GM12878 (cell line): ENCODE measurements at regions of chr7 and their contacts with region 1.

Region 1: GRCh38 chr7:99312316-99313203 is 13.1 kb upstream of the ARPC1A start:
- DNase-seq: peak; percentile 35
- ATAC-seq: peak; percentile 84
- H3K4me3 ChIP-seq: no peak overlapping the region
- H3K27ac ChIP-seq: no peak overlapping the region
- H3K4me1 ChIP-seq: peaks cover 13% of the 10 kb centered on the region
- H3K27me3 ChIP-seq: no peaks in the 10 kb centered on the region
- CTCF ChIP-seq: peak; percentile 87 to 91 (median 88)
- EP300 ChIP-seq: no peak
- POLR2A ChIP-seq: no peak
- RAD21 ChIP-seq: peak; percentile 90

Region 2: DNA sequence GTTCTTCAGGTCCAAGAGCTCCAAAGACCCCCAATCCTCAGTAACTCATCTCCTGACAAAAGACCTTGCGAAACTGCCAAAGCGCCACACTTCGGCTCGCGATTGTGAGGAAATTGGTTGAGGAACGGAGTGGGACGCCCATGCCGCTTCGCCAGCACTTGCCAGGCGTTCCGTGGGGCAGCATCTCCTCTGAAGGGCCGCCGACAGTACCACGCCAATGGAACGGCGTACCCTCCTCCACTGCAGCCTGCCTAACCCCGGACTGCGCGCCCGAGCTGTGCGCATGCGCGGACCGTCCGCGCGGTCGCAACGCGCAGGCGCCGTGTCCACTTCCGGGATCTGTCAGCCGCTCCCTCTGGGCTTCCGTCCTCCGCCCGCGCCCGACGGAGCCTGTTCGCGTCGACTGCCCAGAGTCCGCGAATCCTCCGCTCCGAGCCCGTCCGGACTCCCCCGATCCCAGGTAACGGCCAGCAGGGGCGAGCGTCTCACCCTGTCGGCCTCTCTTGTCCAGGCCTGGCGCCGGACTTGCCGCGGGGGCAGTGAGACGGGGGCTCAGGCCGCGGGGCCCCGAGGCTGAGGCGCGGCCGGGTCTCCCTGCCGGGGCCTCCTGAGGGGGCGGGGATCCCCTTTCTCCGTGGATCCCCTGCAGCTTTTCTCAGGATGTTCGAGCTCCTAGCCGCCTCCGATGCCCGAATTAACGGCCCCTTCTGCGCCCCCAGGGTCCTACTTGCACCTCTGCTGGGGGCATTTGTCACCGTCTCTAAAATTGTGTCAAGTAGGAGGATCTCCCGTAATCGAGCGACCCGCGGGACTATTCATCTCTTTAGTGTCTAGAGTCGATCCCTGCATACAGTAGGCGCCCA is 13.2 kb after region 1 on chr7 and contains the start of gene ARPC1A:
- CTCF ChIA-PET with region 1: interaction called, 12 read pairs
- POLR2A ChIA-PET with region 1: no interaction called
- RAD21 ChIA-PET with region 1: interaction called, 3 read pairs
- SMC1A ChIA-PET with region 1: interaction called, 7 read pairs
- in situ Hi-C with region 1: no loop called
- intact Hi-C with region 1: no loop called
- DNase-seq: peak; percentile 87
- ATAC-seq: peak; percentile 93
- H3K4me3 ChIP-seq: peak within 1 kb of the TSS; percentile 100
- H3K27ac ChIP-seq: peak within 1 kb of the TSS; percentile 63
- H3K4me1 ChIP-seq: peaks cover 4% of the 10 kb centered on the region; the same call in 1 of the 2 replicates
- H3K27me3 ChIP-seq: no peaks in the 10 kb centered on the region
- CTCF ChIP-seq: peak in 2 of 3 experiments; percentile 3 to 10; a peak in 2 of 6 replicates
- EP300 ChIP-seq: no peak
- POLR2A ChIP-seq: peak; percentile 99
- RAD21 ChIP-seq: no peak
- polyA plus RNA-seq, gene ARPC1A: 102 to 103 TPM

Region 3: GRCh38 chr7:100034871-100035510 is 722.4 kb after region 1 on chr7:
- CTCF ChIA-PET with region 1: no interaction called
- POLR2A ChIA-PET with region 1: no interaction called
- RAD21 ChIA-PET with region 1: no interaction called
- SMC1A ChIA-PET with region 1: no interaction called
- in situ Hi-C with region 1: no loop called
- intact Hi-C with region 1: no loop called
- DNase-seq: no peak
- ATAC-seq: no peak
- H3K4me3 ChIP-seq: no peak overlapping the region
- H3K27ac ChIP-seq: no peak overlapping the region
- H3K4me1 ChIP-seq: no peaks in the 10 kb centered on the region
- H3K27me3 ChIP-seq: no peaks in the 10 kb centered on the region
- CTCF ChIP-seq: no peak
- EP300 ChIP-seq: no peak
- POLR2A ChIP-seq: no peak
- RAD21 ChIP-seq: no peak